OCI-LY7 (cell line): ENCODE measurements at regions of chr13 and their contacts with region 1.

Region 1: GRCh38 chr13:90205911-90206310 is 1141.6 kb upstream of the MIR17HG start:
- DNase-seq: no peak
- H3K4me3 ChIP-seq: no peak overlapping the region
- H3K27ac ChIP-seq: no peak overlapping the region
- H3K4me1 ChIP-seq: no peaks in the 10 kb centered on the region
- CTCF ChIP-seq: no peak

Region 2: DNA sequence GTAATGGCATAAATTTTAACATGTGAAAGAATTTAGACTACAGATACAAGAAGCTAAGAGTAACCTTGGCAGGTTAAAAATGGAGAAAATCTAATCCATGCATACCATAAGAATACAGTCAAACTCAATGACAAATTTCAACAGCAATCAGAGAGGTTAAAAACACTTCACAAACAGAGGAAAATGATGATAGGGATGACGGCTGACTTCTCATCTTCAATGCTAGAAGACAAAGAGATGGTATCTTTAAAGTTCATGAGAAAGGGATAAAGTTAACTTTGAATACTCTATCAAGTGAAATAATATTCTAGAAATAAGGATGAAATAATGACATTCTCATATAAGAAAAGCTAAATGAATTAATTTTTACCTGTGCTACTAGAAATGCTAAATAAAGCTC is 11.4 kb after region 1 on chr13:
- CTCF ChIA-PET with region 1: no interaction called
- POLR2A ChIA-PET with region 1: interaction called, 11 read pairs
- intact Hi-C with region 1: no loop called
- DNase-seq: no peak
- H3K4me3 ChIP-seq: no peak overlapping the region
- H3K27ac ChIP-seq: no peak overlapping the region
- H3K4me1 ChIP-seq: no peaks in the 10 kb centered on the region
- CTCF ChIP-seq: no peak

Region 3: DNA sequence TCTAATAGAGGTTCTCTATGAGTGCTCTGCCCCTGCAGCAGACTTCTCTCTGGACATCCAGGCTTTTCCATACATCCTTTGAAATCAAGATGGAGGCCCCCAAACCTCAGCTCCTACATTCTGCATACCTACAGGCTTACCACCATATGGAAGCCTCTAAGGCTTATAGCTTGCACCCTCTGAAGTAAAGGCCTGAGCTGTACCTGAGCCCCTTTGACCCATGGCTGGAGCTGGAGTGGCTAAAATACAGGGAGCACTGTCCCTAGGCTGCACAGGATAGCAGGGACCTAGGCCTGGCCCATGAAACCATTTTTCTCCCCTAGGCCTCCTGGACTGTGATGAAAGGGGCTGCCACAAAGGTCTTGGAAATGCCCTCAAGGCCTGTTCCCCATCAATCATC is 55.4 kb after region 1 on chr13:
- CTCF ChIA-PET with region 1: no interaction called
- POLR2A ChIA-PET with region 1: no interaction called
- intact Hi-C with region 1: no loop called
- DNase-seq: no peak
- H3K4me3 ChIP-seq: no peak overlapping the region
- H3K27ac ChIP-seq: no peak overlapping the region
- H3K4me1 ChIP-seq: no peaks in the 10 kb centered on the region
- CTCF ChIP-seq: no peak